ENCODE measurements at regions of chr1 and their contacts with region 1.

Region 1: DNA sequence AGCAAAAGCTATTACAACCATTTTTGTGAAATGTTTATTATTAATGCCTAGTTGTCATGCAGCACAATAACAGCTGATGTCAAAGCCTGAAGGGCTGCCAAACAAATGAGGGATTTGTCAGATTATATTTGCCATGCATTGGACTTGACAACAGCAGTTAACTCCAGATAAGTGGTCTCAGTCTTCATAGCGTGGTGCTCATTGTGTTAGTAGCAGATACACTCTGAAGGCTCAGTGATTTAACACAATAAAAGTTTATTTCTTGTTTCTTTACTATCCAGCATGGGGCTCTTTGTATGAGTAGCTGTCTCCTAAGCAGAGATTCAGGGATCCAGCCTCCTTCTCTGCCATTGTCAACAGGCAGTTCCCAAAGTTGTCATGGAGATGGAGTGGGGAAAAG is 76.0 kb upstream of the PTGFRN start:
- DNase-seq: no peak
- ATAC-seq: no peak
- H3K4me3 ChIP-seq: no peak overlapping the region
- H3K27ac ChIP-seq: no peak overlapping the region
- H3K4me1 ChIP-seq: no peaks in the 10 kb centered on the region
- H3K27me3 ChIP-seq: no peaks in the 10 kb centered on the region; a peak in 1 of 4 replicates
- CTCF ChIP-seq: no peak
- EP300 ChIP-seq: no peak
- POLR2A ChIP-seq: no peak
- RAD21 ChIP-seq: no peak

Region 2: GRCh38 chr1:116690849-116691406 is 142.8 kb before region 1 on chr1:
- CTCF ChIA-PET with region 1: no interaction called
- POLR2A ChIA-PET with region 1: no interaction called
- RAD21 ChIA-PET with region 1: no interaction called
- SMC1A ChIA-PET with region 1: no interaction called
- in situ Hi-C with region 1: no loop called
- intact Hi-C with region 1: no loop called
- DNase-seq: no peak
- ATAC-seq: no peak
- H3K4me3 ChIP-seq: no peak overlapping the region
- H3K27ac ChIP-seq: no peak overlapping the region
- H3K4me1 ChIP-seq: no peaks in the 10 kb centered on the region
- H3K27me3 ChIP-seq: no peaks in the 10 kb centered on the region; a peak in 1 of 4 replicates
- CTCF ChIP-seq: no peak
- EP300 ChIP-seq: no peak
- POLR2A ChIP-seq: no peak
- RAD21 ChIP-seq: no peak

Region 3: GRCh38 chr1:116847688-116848531 is 14.2 kb after region 1 on chr1:
- CTCF ChIA-PET with region 1: interaction called, 21 read pairs
- POLR2A ChIA-PET with region 1: interaction called, 10 read pairs
- RAD21 ChIA-PET with region 1: interaction called, 35 read pairs
- SMC1A ChIA-PET with region 1: interaction called, 35 read pairs
- in situ Hi-C with region 1: no loop called
- intact Hi-C with region 1: no loop called
- DNase-seq: no peak
- ATAC-seq: peak; percentile 93
- H3K4me3 ChIP-seq: no peak overlapping the region
- H3K27ac ChIP-seq: no peak overlapping the region
- H3K4me1 ChIP-seq: peaks cover 6% of the 10 kb centered on the region; the same call in 1 of the 2 replicates
- H3K27me3 ChIP-seq: no peaks in the 10 kb centered on the region
- CTCF ChIP-seq: no peak
- EP300 ChIP-seq: no peak; a peak in 2 of 4 replicates
- POLR2A ChIP-seq: no peak
- RAD21 ChIP-seq: no peak

Region 4: DNA sequence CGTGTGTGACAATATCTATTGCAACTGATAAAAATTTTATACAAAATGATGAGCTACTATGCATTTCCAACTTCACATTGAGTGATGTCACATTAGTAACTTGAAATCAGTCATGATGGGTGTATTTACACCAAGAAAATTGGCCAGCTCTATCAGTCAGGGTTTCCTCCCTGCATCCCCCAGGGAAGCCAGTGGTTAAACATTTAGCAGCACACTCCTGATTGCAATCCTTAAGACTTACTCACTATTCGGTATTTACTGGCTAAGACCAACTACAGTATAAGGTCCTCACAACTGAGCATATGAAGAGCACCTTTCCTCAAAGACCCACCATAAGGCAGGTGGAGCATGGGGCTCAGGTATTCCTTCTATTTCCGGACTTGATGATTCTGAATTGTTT is 34.7 kb after region 1 on chr1:
- CTCF ChIA-PET with region 1: no interaction called
- POLR2A ChIA-PET with region 1: no interaction called
- RAD21 ChIA-PET with region 1: no interaction called
- SMC1A ChIA-PET with region 1: no interaction called
- in situ Hi-C with region 1: no loop called
- intact Hi-C with region 1: no loop called
- DNase-seq: no peak
- ATAC-seq: no peak
- H3K4me3 ChIP-seq: no peak overlapping the region
- H3K27ac ChIP-seq: no peak overlapping the region
- H3K4me1 ChIP-seq: no peaks in the 10 kb centered on the region
- H3K27me3 ChIP-seq: no peaks in the 10 kb centered on the region
- CTCF ChIP-seq: no peak
- EP300 ChIP-seq: no peak
- POLR2A ChIP-seq: no peak
- RAD21 ChIP-seq: no peak